ENCODE measurements at regions of chr21 and their contacts with region 1.

Region 1: DNA sequence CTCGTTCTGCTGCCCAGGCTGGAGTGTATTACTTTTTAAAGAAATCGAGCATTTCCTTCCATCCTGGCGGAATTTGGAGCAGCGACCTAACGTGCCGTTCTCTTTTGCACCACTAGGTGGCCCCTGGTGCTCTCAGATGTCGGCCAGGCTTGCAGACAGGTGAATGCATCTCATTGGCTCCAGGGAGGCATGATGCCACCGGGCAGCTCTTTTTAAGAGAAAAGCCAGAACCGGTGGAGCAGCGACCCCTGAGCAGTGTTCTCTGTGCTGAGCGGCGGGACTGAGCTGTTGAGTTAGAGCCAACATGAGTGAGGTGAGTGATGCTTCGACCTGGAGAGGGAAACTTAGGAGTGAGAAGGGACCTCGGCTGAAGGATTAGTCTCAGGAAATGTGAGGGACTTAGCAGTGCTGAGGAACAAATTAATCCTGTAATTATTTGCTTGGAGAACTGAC is at the start of gene PCP4:
- DNase-seq: peak in 1 of 2 donors; percentile 69
- H3K4me3 ChIP-seq: no peak within 1 kb of the TSS
- H3K27ac ChIP-seq: no peak within 1 kb of the TSS
- H3K4me1 ChIP-seq: peaks cover 0 to 9% (median 0%) of the 10 kb centered on the region in 4 donors
- H3K27me3 ChIP-seq: no peaks in the 10 kb centered on the region
- CTCF ChIP-seq: peak; percentile 76 to 82

Region 2: GRCh38 chr21:39788383-39788782 is 78.8 kb before region 1 on chr21:
- intact Hi-C with region 1: loop called (anchors 2 kb)
- DNase-seq: peak; percentile 38 to 82
- H3K4me3 ChIP-seq: peak overlapping the region in 1 of 2 donors; percentile 8
- H3K27ac ChIP-seq: peak overlapping the region in 1 of 2 donors; percentile 17
- H3K4me1 ChIP-seq: peaks cover 0 to 19% (median 0%) of the 10 kb centered on the region in 4 donors
- H3K27me3 ChIP-seq: no peaks in the 10 kb centered on the region
- CTCF ChIP-seq: peak; percentile 68 to 82